Activated CD8-positive, alpha-beta T cell treated with anti-CD3 and anti-CD28 coated beads for 36 hours (primary cell): ENCODE measurements at regions of chr21 and their contacts with region 1.

Region 1: GRCh38 chr21:38355992-38356797 is 99.4 kb downstream of the KCNJ15 start:
- DNase-seq: peak; percentile 77
- ATAC-seq: peak; percentile 79
- H3K4me3 Mint-ChIP-seq: no peak overlapping the region
- H3K27ac Mint-ChIP-seq: no peak overlapping the region
- H3K4me1 Mint-ChIP-seq: peaks cover 4% of the 10 kb centered on the region
- H3K27me3 Mint-ChIP-seq: peaks cover 10% of the 10 kb centered on the region
- CTCF ChIP-seq: peak; percentile 96

Region 2: DNA sequence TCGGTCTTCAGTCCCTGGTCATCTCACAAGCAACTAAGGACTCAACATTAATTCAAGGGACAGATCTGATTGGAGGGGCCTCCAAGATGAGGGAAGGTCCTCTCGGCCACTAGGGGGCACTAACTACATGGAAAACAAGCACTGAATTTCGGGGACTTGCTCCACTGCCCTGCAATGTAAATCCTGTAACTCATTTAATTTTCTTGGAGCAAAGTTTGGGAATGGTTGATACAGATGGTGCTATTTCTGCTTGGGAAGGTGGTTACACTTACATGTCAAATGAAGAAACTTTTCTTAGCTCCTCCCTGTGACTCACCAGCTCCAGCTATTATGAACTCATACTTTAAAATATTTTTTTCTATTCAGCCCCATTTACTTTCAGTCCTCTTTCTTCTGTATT is 196.8 kb before region 1 on chr21:
- CTCF ChIA-PET with region 1: interaction called, 55 read pairs
- POLR2A ChIA-PET with region 1: interaction called, 3 read pairs
- intact Hi-C with region 1: loop called (anchors 2 kb)
- DNase-seq: peak; percentile 72
- ATAC-seq: no peak
- H3K4me3 Mint-ChIP-seq: no peak overlapping the region
- H3K27ac Mint-ChIP-seq: no peak overlapping the region
- H3K4me1 Mint-ChIP-seq: no peaks in the 10 kb centered on the region
- H3K27me3 Mint-ChIP-seq: peaks cover 12% of the 10 kb centered on the region
- CTCF ChIP-seq: peak; percentile 86

Region 3: GRCh38 chr21:38219049-38219628 is 137.1 kb before region 1 on chr21:
- CTCF ChIA-PET with region 1: interaction called, 55 read pairs
- POLR2A ChIA-PET with region 1: no interaction called
- intact Hi-C with region 1: loop called (anchors 5 kb)
- DNase-seq: peak; percentile 65
- ATAC-seq: peak; percentile 47
- H3K4me3 Mint-ChIP-seq: no peak overlapping the region
- H3K27ac Mint-ChIP-seq: no peak overlapping the region
- H3K4me1 Mint-ChIP-seq: no peaks in the 10 kb centered on the region
- H3K27me3 Mint-ChIP-seq: no peaks in the 10 kb centered on the region
- CTCF ChIP-seq: peak; percentile 81

Region 4: GRCh38 chr21:38343693-38344092 is 12.5 kb before region 1 on chr21:
- CTCF ChIA-PET with region 1: interaction called, 13 read pairs
- POLR2A ChIA-PET with region 1: no interaction called
- intact Hi-C with region 1: no loop called
- DNase-seq: no peak
- ATAC-seq: no peak
- H3K4me3 Mint-ChIP-seq: no peak overlapping the region
- H3K27ac Mint-ChIP-seq: no peak overlapping the region
- H3K4me1 Mint-ChIP-seq: peaks cover 2% of the 10 kb centered on the region
- H3K27me3 Mint-ChIP-seq: no peaks in the 10 kb centered on the region
- CTCF ChIP-seq: no peak